ENCODE measurements at regions of chr20 and their contacts with region 1.

Region 1: GRCh38 chr20:53216856-53217576 is 244.9 kb downstream of the TSHZ2 start:
- DNase-seq: peak; percentile 58
- H3K4me3 Mint-ChIP-seq: no peak overlapping the region
- H3K27ac Mint-ChIP-seq: no peak overlapping the region
- H3K4me1 Mint-ChIP-seq: peaks cover 23% of the 10 kb centered on the region
- H3K27me3 Mint-ChIP-seq: peaks cover under 1% of the 10 kb centered on the region

Region 2: GRCh38 chr20:52242237-52243230 is 974.5 kb before region 1 on chr20:
- intact Hi-C with region 1: loop called (anchors 2 kb)
- DNase-seq: no peak
- H3K4me3 Mint-ChIP-seq: no peak overlapping the region
- H3K27ac Mint-ChIP-seq: no peak overlapping the region
- H3K4me1 Mint-ChIP-seq: peaks cover 2% of the 10 kb centered on the region
- H3K27me3 Mint-ChIP-seq: no peaks in the 10 kb centered on the region

Region 3: DNA sequence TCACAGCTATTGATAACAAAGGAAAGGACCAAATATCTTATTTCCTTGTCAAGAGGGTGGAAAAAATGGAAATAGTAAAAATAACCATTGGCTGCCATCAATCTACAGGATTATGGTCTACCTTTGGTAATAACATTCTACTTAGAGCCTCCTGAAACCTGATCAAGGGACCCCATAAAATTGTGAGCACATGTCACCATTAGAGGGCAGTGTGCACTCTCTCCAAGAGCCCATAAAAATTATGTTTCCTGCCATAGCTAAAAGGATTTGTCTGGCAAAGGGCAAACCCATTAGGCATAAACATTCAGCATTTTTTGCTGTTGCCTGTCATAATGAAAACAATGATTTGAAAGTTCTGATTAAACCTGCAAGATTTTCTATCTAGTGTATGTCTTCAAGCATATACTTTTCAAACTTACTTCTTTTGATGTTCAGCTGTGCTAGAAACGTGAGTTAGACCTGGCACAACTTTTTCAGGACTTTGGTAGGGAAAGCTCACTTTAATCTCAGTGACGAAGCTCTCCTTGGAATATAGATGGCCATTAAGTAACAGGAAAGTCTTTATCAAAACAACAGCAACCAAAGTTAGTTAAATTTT is 904.8 kb before region 1 on chr20:
- intact Hi-C with region 1: loop called (anchors 2 kb)
- DNase-seq: peak; percentile 31
- H3K4me3 Mint-ChIP-seq: no peak overlapping the region
- H3K27ac Mint-ChIP-seq: no peak overlapping the region
- H3K4me1 Mint-ChIP-seq: peaks cover 12% of the 10 kb centered on the region
- H3K27me3 Mint-ChIP-seq: no peaks in the 10 kb centered on the region

Region 4: DNA sequence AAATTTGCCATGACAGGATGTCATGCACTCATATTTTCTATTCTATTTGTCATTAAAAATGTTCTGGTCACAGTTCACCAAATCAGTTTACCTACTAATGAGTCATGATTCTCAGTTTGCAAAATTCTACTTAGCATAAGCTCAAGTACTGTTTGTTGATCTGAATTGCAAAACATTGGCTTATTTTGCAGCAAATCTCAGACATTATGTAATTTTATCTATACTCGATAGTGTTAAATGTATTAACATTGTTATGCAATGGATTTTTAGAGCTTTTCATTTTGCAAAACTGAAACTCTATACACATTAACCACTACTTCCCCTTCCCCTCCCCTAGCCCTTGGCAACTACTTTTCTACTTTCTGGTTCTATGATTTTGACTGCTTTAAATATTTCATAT is 811.6 kb before region 1 on chr20:
- intact Hi-C with region 1: loop called (anchors 5 kb)
- DNase-seq: no peak
- H3K4me3 Mint-ChIP-seq: no peak overlapping the region
- H3K27ac Mint-ChIP-seq: peak overlapping the region; percentile 17
- H3K4me1 Mint-ChIP-seq: peaks cover 41% of the 10 kb centered on the region
- H3K27me3 Mint-ChIP-seq: no peaks in the 10 kb centered on the region

Region 5: GRCh38 chr20:53021934-53022333 is 195.1 kb before region 1 on chr20:
- intact Hi-C with region 1: loop called (anchors 2 kb)
- DNase-seq: no peak
- H3K4me3 Mint-ChIP-seq: no peak overlapping the region
- H3K27ac Mint-ChIP-seq: peak overlapping the region; percentile 56
- H3K4me1 Mint-ChIP-seq: peaks cover 50% of the 10 kb centered on the region
- H3K27me3 Mint-ChIP-seq: no peaks in the 10 kb centered on the region

Measured in activated T-helper 2 cell treated with anti-CD3 and anti-CD28 coated beads, Interferon-gamma antibody, Interleukin-2, Interleukin-4, amounts not matched to agents 10 μg/mL and 5 μg/mL and 100 μg/mL, durations not matched to agents 14 hours and 24 hours and 36 hours (primary cell).